SK-N-SH (cell line): ENCODE measurements at regions of chr3 and their contacts with region 1.

Region 1: GRCh38 chr3:160003520-160004128 is 15.0 kb downstream of the IL12A start:
- DNase-seq: peak; percentile 57
- H3K4me3 ChIP-seq: peak overlapping the region in 1 of 2 experiments; percentile 23; a peak in 1 of 4 replicates
- H3K27ac ChIP-seq: no peak overlapping the region
- H3K4me1 ChIP-seq: peaks cover 0 to 11% of the 10 kb centered on the region in 2 experiments; a peak in 2 of 4 replicates
- H3K27me3 ChIP-seq: no peaks in the 10 kb centered on the region
- CTCF ChIP-seq: peak; percentile 80
- EP300 ChIP-seq: no peak
- RAD21 ChIP-seq: peak; percentile 72

Region 2: DNA sequence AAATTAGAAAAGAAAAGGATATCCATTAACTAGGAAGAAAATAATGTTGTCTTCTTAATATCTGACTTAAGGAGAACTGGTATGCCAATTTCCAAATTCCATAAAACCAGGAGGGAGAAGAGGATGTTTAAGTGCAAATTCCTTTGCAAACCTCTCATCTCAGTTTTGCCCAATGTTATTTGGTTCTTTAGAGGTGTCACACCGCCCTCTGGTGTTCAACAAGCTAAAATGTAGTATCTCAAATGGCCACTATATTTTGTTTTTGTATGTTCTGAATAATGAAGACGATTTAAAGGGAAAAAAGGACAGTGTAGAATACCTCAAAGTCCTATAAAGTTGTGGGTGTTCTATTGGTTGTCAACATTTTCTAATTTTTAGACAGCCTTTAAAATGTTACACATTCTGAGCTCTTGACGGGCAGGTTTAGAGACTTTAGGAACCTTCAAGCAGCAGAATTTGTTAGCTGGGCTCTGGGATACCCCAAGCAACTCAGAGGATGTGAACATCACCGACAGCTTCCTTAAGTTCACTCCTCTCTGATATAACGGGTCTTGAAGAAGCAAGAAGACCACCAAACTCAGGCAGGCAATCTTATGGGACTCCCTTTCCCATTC is 743.5 kb before region 1 on chr3:
- CTCF ChIA-PET with region 1: interaction called, 59 read pairs
- POLR2A ChIA-PET with region 1: no interaction called
- DNase-seq: peak; percentile 30
- H3K4me3 ChIP-seq: no peak overlapping the region; a peak in 1 of 4 replicates
- H3K27ac ChIP-seq: no peak overlapping the region
- H3K4me1 ChIP-seq: peaks cover 0 to 2% of the 10 kb centered on the region in 2 experiments; a peak in 1 of 4 replicates
- H3K27me3 ChIP-seq: no peaks in the 10 kb centered on the region
- CTCF ChIP-seq: peak; percentile 83
- EP300 ChIP-seq: no peak
- RAD21 ChIP-seq: peak; percentile 94

Region 3: GRCh38 chr3:159627634-159628033 is 376.0 kb before region 1 on chr3:
- CTCF ChIA-PET with region 1: no interaction called
- POLR2A ChIA-PET with region 1: no interaction called
- DNase-seq: no peak
- H3K4me3 ChIP-seq: no peak overlapping the region
- H3K27ac ChIP-seq: no peak overlapping the region
- H3K4me1 ChIP-seq: no peaks in the 10 kb centered on the region; a peak in 1 of 4 replicates
- H3K27me3 ChIP-seq: no peaks in the 10 kb centered on the region
- CTCF ChIP-seq: no peak
- EP300 ChIP-seq: no peak
- RAD21 ChIP-seq: no peak

Region 4: DNA sequence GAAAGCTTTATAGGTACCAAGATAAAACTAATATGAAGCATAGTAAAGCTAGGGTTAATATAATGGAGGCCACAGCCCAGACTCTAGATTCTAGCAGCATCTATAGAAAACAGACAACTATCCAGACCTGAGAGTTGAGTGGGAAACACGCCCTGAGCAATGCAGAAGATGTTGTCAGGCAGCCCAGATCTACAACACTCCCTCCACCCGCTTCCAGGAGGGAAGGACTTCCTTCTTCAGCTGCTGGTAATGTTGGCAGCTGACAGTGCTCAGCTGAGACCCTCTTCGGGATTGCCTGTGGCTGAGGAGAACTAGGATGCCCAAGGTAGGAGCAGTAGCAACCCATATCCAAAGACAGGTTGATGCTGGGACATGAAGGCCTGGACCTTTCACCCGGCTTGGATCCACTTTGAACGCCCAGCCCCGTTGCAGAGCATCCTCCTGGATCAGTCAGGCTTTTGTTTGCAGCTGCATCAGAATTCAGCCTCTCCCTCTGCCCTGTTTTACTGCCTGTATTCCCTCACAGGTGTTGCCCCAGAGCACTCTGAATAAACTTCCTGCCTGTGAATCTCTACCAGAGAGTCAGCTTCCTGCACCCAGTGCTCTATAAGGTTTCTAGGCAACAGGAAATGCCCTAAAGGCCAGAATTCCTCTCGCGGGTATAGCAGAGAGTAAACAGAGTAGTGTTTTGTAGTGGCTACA is 189.7 kb before region 1 on chr3:
- CTCF ChIA-PET with region 1: interaction called, 122 read pairs
- POLR2A ChIA-PET with region 1: no interaction called
- DNase-seq: no peak
- H3K4me3 ChIP-seq: no peak overlapping the region
- H3K27ac ChIP-seq: no peak overlapping the region
- H3K4me1 ChIP-seq: peaks cover 0 to 15% of the 10 kb centered on the region in 2 experiments; a peak in 1 of 4 replicates
- H3K27me3 ChIP-seq: no peaks in the 10 kb centered on the region
- CTCF ChIP-seq: no peak
- EP300 ChIP-seq: no peak
- RAD21 ChIP-seq: no peak

Region 5: GRCh38 chr3:159852821-159853505 is 150.7 kb before region 1 on chr3:
- CTCF ChIA-PET with region 1: interaction called, 58 read pairs
- POLR2A ChIA-PET with region 1: no interaction called
- DNase-seq: no peak
- H3K4me3 ChIP-seq: peak overlapping the region; percentile 39 to 53
- H3K27ac ChIP-seq: peak overlapping the region; percentile 93 to 100
- H3K4me1 ChIP-seq: peaks cover 30 to 72% of the 10 kb centered on the region in 2 experiments
- H3K27me3 ChIP-seq: no peaks in the 10 kb centered on the region
- CTCF ChIP-seq: no peak
- EP300 ChIP-seq: no peak
- RAD21 ChIP-seq: no peak

Region 6: GRCh38 chr3:159897331-159898075 is 106.1 kb before region 1 on chr3:
- CTCF ChIA-PET with region 1: interaction called, 270 read pairs
- POLR2A ChIA-PET with region 1: interaction called, 3 read pairs
- DNase-seq: peak; percentile 21
- H3K4me3 ChIP-seq: no peak overlapping the region
- H3K27ac ChIP-seq: peak overlapping the region; percentile 5 to 69; a peak in 3 of 4 replicates
- H3K4me1 ChIP-seq: peaks cover 0 to 27% of the 10 kb centered on the region in 2 experiments; a peak in 3 of 4 replicates
- H3K27me3 ChIP-seq: no peaks in the 10 kb centered on the region
- CTCF ChIP-seq: no peak
- EP300 ChIP-seq: peak in 1 of 2 experiments; percentile 59; a peak in 2 of 4 replicates
- RAD21 ChIP-seq: no peak

Region 7: DNA sequence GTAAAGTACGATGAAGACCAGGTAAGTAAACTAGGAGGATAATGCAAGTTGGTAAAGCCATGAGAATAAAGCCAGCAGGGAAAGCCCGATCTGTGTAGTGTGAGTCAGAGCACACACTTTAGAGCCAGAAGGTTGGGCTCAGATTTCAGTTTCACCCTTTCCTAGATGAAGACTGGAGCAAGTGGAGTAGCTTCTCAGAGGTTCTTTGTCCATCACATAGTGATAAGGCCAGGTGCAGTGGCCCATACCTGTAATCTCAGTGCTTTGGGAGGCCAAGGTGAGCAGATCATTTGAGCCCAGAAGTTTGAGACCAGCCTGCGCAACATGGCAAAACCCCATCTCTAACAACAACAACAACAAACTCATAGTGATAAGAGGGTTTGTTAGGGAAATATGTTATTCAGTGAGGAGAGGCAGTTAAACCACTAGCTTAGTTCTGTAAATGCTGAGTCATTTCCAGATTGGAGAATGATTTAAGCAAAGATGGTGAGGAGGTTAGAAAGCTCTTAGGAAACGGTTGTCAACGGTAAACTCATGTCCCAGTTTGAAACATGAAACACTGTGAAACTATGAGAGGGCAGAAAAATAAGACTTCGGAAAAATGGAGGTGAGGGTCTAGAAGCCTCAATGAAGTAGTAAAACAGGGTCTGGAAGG is 24.0 kb after region 1 on chr3:
- CTCF ChIA-PET with region 1: interaction called, 16 read pairs
- POLR2A ChIA-PET with region 1: no interaction called
- DNase-seq: no peak
- H3K4me3 ChIP-seq: no peak overlapping the region
- H3K27ac ChIP-seq: peak overlapping the region in 1 of 2 experiments; percentile 63; a peak in 2 of 4 replicates
- H3K4me1 ChIP-seq: no peaks in the 10 kb centered on the region
- H3K27me3 ChIP-seq: no peaks in the 10 kb centered on the region
- CTCF ChIP-seq: no peak
- EP300 ChIP-seq: no peak
- RAD21 ChIP-seq: no peak